ENCODE measurements at regions of chrX and their contacts with region 1.

Region 1: GRCh38 chrX:24498975-24499374 is 33.9 kb downstream of the PDK3 start:
- DNase-seq: no peak

Region 2: DNA sequence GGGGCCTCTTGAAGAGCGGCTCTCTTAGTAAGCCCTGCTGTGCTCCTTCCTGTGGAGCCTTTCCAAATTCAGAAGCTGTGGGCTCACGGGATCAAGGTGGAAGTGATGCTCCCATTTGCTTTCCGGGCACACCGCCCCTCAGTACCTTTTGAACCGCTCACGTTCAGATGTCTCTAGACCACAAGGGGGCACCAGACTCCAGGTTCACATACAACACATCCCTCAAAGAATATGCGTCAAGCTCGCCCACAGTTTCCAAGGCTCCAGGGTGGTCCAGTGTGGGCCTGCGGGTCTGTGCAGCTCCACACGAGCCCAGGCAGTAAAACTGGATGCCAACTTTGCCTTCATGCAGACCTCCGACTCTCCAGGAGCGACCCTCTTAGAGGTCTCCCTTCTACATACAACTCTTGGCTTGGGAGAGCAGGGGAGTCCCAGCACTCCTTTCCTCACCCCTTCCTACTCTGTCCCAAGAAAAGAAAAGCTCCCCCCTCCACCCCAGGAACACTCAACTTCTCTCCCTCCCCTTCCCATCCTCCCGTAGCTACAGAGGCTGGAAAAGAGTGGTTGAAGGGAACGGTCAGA is 127.5 kb before region 1 on chrX:
- CTCF ChIA-PET with region 1: interaction called, 10 read pairs
- POLR2A ChIA-PET with region 1: no interaction called
- DNase-seq: peak; percentile 75

Region 3: DNA sequence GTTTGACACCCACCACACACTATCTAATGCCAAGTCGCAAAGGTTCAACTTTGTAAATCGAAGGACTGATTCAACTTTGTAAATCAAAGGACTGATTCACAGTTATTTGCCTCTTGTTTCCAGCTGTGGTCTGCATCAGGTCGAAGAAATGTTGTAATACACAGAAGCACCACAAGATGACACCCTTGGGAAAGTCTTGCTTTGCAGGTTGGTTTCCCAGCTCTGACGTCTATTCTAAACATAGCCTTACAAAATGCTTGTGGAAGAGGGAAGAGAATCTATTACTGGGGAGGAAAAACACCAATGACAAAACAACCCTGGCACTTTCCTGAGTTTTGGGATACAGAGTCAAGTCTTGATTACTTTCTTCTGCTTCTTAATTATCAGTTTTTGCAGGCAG is 103.2 kb before region 1 on chrX:
- CTCF ChIA-PET with region 1: interaction called, 49 read pairs
- POLR2A ChIA-PET with region 1: no interaction called
- DNase-seq: peak; percentile 75

Region 4: DNA sequence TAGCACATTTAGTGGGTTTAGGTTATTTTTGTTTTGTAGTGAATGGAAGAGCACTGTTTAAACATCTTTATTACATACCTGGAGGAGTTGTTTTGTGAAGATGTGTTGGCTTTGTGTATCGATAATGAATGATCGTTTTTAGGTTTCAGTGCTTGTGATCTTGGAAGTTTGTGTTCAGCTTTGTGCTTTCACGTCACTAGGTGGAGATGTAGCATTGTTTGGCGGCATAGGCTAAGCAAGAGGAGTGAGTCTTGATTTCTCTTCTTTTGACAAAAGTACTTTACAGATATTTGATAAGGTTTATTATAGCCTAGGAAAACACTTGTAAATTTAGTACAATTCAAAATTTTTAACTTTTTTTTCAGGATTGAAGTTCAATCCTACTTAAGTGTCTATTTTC is 16.5 kb after region 1 on chrX:
- CTCF ChIA-PET with region 1: no interaction called
- POLR2A ChIA-PET with region 1: no interaction called
- DNase-seq: no peak

Measured in HEK293T (cell line).